ENCODE measurements at regions of chr19 and their contacts with region 1.

Region 1: GRCh38 chr19:35066691-35067563 is 25.4 kb downstream of the HPN start:
- DNase-seq: peak; percentile 78 to 85
- H3K4me3 ChIP-seq: no peak overlapping the region
- H3K27ac ChIP-seq: no peak overlapping the region
- H3K4me1 ChIP-seq: peaks cover 23% of the 10 kb centered on the region
- H3K27me3 ChIP-seq: no peaks in the 10 kb centered on the region
- CTCF ChIP-seq: peak; percentile 96

Region 2: GRCh38 chr19:34974646-34975045 is 92.3 kb before region 1 on chr19:
- CTCF ChIA-PET with region 1: no interaction called
- POLR2A ChIA-PET with region 1: no interaction called
- intact Hi-C with region 1: loop called (anchors 5 kb)
- DNase-seq: no peak
- H3K4me3 ChIP-seq: no peak overlapping the region
- H3K27ac ChIP-seq: no peak overlapping the region
- H3K4me1 ChIP-seq: no peaks in the 10 kb centered on the region
- H3K27me3 ChIP-seq: peaks cover 44% of the 10 kb centered on the region
- CTCF ChIP-seq: no peak

Region 3: DNA sequence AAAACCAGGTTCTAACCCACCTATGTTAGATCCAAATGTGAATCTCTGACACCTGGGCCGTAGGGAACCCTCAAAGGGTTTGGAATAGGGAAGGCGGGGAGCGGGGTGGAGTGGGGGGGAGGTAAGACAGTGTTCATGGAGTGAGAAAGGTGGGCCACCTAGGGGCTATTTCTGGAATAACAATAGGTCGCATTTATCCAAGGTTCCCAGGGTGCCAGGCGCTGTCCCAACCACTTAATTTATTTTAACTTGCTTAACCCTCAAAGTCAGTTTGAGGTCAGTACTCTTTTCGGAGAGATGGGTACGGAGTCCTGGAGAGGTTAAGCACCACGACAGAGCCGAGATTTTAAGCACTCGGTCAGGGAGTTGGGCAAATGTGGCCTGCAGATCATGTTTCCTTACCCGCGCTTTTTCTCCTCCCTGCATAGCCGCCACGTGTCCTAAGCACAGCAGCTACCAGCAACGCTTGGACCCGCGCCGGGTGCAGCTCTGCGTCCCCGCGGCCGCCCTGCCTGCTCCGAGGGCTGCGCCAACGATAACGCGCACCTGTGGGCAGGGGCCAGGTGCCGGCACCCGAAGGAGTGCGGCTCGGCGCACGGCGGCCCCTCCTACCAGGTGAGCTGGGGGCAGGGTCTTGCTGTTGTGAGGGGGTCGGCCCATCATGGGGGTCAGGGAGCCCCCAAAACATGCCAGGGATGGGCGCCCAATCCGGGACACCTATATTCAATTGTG is 23.7 kb after region 1 on chr19:
- CTCF ChIA-PET with region 1: interaction called, 3 read pairs
- POLR2A ChIA-PET with region 1: no interaction called
- intact Hi-C with region 1: loop called (anchors 1 kb)
- DNase-seq: peak in 1 of 2 experiments; percentile 50
- H3K4me3 ChIP-seq: peak overlapping the region; percentile 26; the same call in 1 of the 2 replicates
- H3K27ac ChIP-seq: no peak overlapping the region
- H3K4me1 ChIP-seq: 0 out of 2 replicates have a peak, but pooled peaks cover 4% of the 10 kb centered on the region
- H3K27me3 ChIP-seq: no peaks in the 10 kb centered on the region
- CTCF ChIP-seq: peak; percentile 82

Region 4: DNA sequence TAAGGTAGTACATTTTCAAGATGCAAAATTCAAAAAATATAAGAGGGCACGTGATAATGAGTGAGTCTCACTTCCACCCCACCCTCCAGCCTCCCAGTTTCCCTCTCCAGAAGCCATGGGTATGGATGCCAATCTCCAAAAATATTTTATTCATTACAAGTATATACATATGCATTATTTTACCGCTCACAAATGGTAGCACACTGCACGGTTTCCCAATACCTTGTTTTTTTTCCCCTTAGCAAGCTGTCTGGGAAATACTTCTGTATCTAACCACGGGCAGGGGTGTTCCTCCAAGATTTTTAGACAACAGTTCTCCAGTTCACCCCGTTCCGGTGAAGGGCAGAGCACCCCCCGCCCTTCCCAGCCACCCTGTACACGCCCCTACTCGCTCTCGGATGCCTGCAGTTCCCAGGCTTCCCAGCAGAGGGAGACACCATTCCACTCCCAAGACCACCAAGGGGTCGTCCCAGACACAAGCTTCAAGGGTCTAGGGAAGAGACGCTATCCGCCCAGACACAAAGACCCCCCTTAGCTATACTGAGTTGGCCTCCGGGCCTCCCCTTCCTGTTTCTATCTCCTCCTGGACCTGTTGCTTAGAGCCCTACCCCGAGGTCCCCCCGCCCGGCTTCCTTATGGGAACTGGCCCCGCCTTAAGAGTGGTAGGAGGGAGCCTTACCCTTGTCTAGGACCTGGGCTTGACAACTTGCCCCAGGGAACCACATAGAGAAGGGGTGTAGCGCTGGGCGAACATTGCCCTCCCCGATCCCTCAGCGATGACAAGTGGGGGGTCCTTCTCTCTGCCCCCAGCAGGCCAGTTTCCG is 47.6 kb after region 1 on chr19:
- CTCF ChIA-PET with region 1: interaction called, 3 read pairs
- POLR2A ChIA-PET with region 1: no interaction called
- intact Hi-C with region 1: loop called (anchors 1 kb)
- DNase-seq: peak; percentile 59 to 81
- H3K4me3 ChIP-seq: peak overlapping the region; percentile 89
- H3K27ac ChIP-seq: peak overlapping the region; percentile 71
- H3K4me1 ChIP-seq: peaks cover 51% of the 10 kb centered on the region
- H3K27me3 ChIP-seq: no peaks in the 10 kb centered on the region
- CTCF ChIP-seq: peak; percentile 100

Region 5: GRCh38 chr19:35135389-35135909 is 68.5 kb after region 1 on chr19:
- CTCF ChIA-PET with region 1: interaction called, 23 read pairs
- POLR2A ChIA-PET with region 1: no interaction called
- intact Hi-C with region 1: loop called (anchors 1 kb)
- DNase-seq: peak in 1 of 2 experiments; percentile 71
- H3K4me3 ChIP-seq: no peak overlapping the region
- H3K27ac ChIP-seq: no peak overlapping the region
- H3K4me1 ChIP-seq: peaks cover 8% of the 10 kb centered on the region; the same call in 1 of the 2 replicates
- H3K27me3 ChIP-seq: no peaks in the 10 kb centered on the region
- CTCF ChIP-seq: peak; percentile 93

Region 6: DNA sequence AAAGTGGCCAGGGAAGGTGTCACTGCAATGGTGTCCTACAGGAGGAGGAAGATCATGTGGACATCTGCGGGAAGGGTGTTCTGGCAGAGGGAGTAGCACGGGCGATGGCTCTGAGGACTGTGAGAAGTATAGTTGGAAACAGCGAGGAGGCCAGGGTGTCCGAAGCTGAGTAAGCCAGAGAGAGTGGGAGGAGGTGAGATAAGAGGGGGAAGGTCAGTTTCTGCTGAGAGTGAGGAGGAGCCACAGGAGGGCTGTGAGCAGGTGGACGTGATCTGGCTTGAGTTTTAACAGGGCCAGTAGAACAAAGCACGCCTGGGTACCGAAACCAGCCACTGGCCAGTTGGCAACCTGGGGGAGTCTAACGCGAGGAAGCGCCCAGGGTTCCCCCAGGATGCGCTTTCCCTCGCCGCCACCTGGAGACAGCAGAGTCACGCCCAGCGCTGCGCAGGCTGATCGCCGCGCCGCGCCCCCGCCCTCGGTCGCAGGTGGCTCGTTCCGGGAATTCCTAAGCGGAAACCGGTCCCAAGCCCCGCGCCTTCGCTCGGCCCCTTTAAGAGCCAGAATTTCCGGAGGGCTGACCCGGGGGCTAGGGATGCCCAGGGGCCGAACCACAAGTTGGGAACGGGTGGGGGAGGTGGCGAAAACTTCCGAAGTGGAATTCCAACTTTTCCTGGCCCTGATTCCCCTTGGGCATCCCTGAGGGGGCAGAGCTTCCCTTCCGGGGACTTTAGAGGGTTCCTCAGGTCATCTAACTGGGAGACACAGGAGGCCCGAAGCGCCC is 180.8 kb after region 1 on chr19:
- CTCF ChIA-PET with region 1: no interaction called
- POLR2A ChIA-PET with region 1: no interaction called
- intact Hi-C with region 1: loop called (anchors 5 kb)
- DNase-seq: peak; percentile 91 to 96
- H3K4me3 ChIP-seq: peak overlapping the region; percentile 89
- H3K27ac ChIP-seq: peak overlapping the region; percentile 95
- H3K4me1 ChIP-seq: peaks cover 27% of the 10 kb centered on the region
- H3K27me3 ChIP-seq: no peaks in the 10 kb centered on the region
- CTCF ChIP-seq: peak; percentile 59

Region 7: GRCh38 chr19:35269421-35270117 is 202.6 kb after region 1 on chr19:
- CTCF ChIA-PET with region 1: no interaction called
- POLR2A ChIA-PET with region 1: no interaction called
- intact Hi-C with region 1: loop called (anchors 5 kb)
- DNase-seq: peak; percentile 68 to 93
- H3K4me3 ChIP-seq: peak overlapping the region; percentile 66
- H3K27ac ChIP-seq: peak overlapping the region; percentile 47; the same call in 1 of the 2 replicates
- H3K4me1 ChIP-seq: peaks cover 14% of the 10 kb centered on the region; the same call in 1 of the 2 replicates
- H3K27me3 ChIP-seq: no peaks in the 10 kb centered on the region
- CTCF ChIP-seq: peak; percentile 70

Region 8: DNA sequence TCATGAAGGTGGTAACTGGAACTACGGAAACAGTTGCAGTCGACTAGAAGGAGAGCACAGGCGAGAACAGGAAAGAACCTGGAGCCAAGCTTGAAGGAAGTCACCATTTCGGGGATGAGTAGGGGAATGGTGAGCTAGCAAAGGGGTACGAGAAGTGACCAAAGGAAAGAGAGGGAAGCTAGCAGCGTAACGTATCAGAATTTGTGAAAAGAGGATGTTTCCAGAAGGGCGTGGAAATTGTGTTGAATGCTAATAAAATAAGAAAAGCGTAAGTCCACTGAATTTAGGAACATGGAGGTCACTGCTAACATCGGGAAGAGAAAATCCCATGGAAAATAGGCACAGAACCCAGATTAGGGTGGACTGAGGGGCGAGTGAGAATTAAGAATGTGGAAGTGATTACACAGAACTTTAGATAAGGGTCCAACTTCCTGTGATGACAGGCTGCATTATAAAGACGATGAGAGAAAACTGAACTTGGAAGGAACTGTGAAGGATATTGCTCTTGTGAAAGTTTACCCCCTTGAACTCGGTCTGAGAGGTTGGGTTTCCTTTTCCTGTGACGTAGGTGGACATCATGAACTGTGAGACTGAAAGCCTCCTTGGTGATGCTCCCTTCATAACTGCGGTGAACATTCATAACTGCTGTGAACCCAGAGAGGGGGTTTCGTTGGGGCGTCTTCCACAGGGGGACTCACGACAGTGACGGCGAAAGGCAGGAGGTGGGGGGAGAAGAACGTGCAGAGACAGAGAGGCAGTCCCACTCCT is 379.1 kb after region 1 on chr19:
- CTCF ChIA-PET with region 1: no interaction called
- POLR2A ChIA-PET with region 1: no interaction called
- intact Hi-C with region 1: no loop called
- DNase-seq: no peak
- H3K4me3 ChIP-seq: no peak overlapping the region
- H3K27ac ChIP-seq: no peak overlapping the region
- H3K4me1 ChIP-seq: peaks cover 15% of the 10 kb centered on the region
- H3K27me3 ChIP-seq: peaks cover 44% of the 10 kb centered on the region
- CTCF ChIP-seq: no peak